GM12878 (cell line): ENCODE measurements at regions of chr21 and their contacts with region 1.

Region 1: GRCh38 chr21:15483138-15483780 is 246.5 kb upstream of the USP25 start:
- DNase-seq: peak; percentile 45
- ATAC-seq: peak; percentile 100
- H3K4me3 ChIP-seq: no peak overlapping the region
- H3K27ac ChIP-seq: no peak overlapping the region
- H3K4me1 ChIP-seq: no peaks in the 10 kb centered on the region
- H3K27me3 ChIP-seq: no peaks in the 10 kb centered on the region
- CTCF ChIP-seq: peak; percentile 88 to 95 (median 89)
- EP300 ChIP-seq: no peak
- POLR2A ChIP-seq: no peak
- RAD21 ChIP-seq: peak; percentile 96

Region 2: GRCh38 chr21:14259747-14260146 is 1223.5 kb before region 1 on chr21:
- CTCF ChIA-PET with region 1: interaction called, 5 read pairs
- POLR2A ChIA-PET with region 1: no interaction called
- RAD21 ChIA-PET with region 1: interaction called, 3 read pairs
- SMC1A ChIA-PET with region 1: no interaction called
- in situ Hi-C with region 1: no loop called
- intact Hi-C with region 1: loop called (anchors 10 kb)
- DNase-seq: no peak
- ATAC-seq: peak; percentile 76
- H3K4me3 ChIP-seq: no peak overlapping the region
- H3K27ac ChIP-seq: no peak overlapping the region
- H3K4me1 ChIP-seq: no peaks in the 10 kb centered on the region
- H3K27me3 ChIP-seq: no peaks in the 10 kb centered on the region; a peak in 1 of 4 replicates
- CTCF ChIP-seq: peak; percentile 35 to 56 (median 50); a peak in 4 of 6 replicates
- EP300 ChIP-seq: no peak
- POLR2A ChIP-seq: no peak
- RAD21 ChIP-seq: peak; percentile 69

Region 3: DNA sequence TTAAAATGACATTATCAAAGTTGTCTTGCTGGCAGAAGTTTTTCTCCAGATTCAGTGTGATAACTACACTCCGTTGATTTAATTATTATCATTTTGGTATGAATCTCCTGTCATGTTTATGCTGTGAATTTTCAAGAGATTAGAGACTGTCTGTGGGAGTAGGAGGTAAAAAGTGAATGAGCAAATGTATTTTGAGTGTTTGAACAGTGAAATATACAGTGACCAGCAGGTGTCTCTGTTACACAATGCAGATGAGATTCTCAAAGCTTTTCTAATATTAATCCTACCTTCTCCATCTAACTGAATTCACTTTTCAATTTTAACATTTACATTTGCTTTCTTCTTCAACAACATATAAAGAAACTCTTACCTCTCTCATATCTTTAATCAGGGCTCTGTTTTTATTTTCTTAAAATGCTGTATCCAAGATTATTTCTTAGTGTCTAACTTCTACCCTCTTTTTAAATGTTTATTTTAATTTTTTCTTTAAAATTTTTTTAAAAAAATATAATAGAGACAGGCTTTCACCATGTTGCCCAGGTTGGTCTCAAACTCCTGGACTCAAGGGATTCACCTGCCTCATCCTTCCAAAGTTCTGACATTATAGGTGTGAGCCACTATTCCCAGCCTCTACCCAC is 1079.5 kb before region 1 on chr21:
- CTCF ChIA-PET with region 1: no interaction called
- POLR2A ChIA-PET with region 1: no interaction called
- RAD21 ChIA-PET with region 1: interaction called, 3 read pairs
- SMC1A ChIA-PET with region 1: interaction called, 3 read pairs
- in situ Hi-C with region 1: no loop called
- intact Hi-C with region 1: loop called (anchors 2 kb)
- DNase-seq: peak; percentile 9
- ATAC-seq: peak; percentile 78
- H3K4me3 ChIP-seq: no peak overlapping the region
- H3K27ac ChIP-seq: no peak overlapping the region
- H3K4me1 ChIP-seq: no peaks in the 10 kb centered on the region
- H3K27me3 ChIP-seq: no peaks in the 10 kb centered on the region
- CTCF ChIP-seq: peak; percentile 42 to 72 (median 60); a peak in 5 of 6 replicates
- EP300 ChIP-seq: no peak
- POLR2A ChIP-seq: no peak
- RAD21 ChIP-seq: peak; percentile 83

Region 4: GRCh38 chr21:15058854-15059263 is 424.4 kb before region 1 on chr21:
- CTCF ChIA-PET with region 1: interaction called, 5 read pairs
- POLR2A ChIA-PET with region 1: no interaction called
- RAD21 ChIA-PET with region 1: interaction called, 4 read pairs
- SMC1A ChIA-PET with region 1: interaction called, 12 read pairs
- in situ Hi-C with region 1: loop called (anchors 10 kb)
- intact Hi-C with region 1: loop called (anchors 1 kb)
- DNase-seq: no peak
- ATAC-seq: peak; percentile 51
- H3K4me3 ChIP-seq: peak overlapping the region; percentile 52
- H3K27ac ChIP-seq: peak overlapping the region; percentile 80
- H3K4me1 ChIP-seq: peaks cover 4% of the 10 kb centered on the region
- H3K27me3 ChIP-seq: no peaks in the 10 kb centered on the region
- CTCF ChIP-seq: no peak
- EP300 ChIP-seq: no peak
- POLR2A ChIP-seq: no peak
- RAD21 ChIP-seq: no peak

Region 5: GRCh38 chr21:15064576-15065391 is 418.5 kb before region 1 on chr21 and contains the start of gene NRIP1:
- CTCF ChIA-PET with region 1: interaction called, 5 read pairs
- POLR2A ChIA-PET with region 1: no interaction called
- RAD21 ChIA-PET with region 1: interaction called, 5 read pairs
- SMC1A ChIA-PET with region 1: interaction called, 12 read pairs
- in situ Hi-C with region 1: loop called (anchors 10 kb)
- intact Hi-C with region 1: loop called (anchors 1 kb)
- DNase-seq: no peak
- ATAC-seq: peak; percentile 84
- H3K4me3 ChIP-seq: peak within 1 kb of the TSS; percentile 91
- H3K27ac ChIP-seq: peak within 1 kb of the TSS; percentile 63
- H3K4me1 ChIP-seq: no peaks in the 10 kb centered on the region
- H3K27me3 ChIP-seq: peaks cover 0 to 5% of the 10 kb centered on the region in 2 experiments; a peak in 1 of 4 replicates
- CTCF ChIP-seq: no peak
- EP300 ChIP-seq: no peak
- POLR2A ChIP-seq: peak; percentile 80
- RAD21 ChIP-seq: no peak
- polyA plus RNA-seq, gene NRIP1: 2.9 to 4.0 TPM

Region 6: GRCh38 chr21:15826147-15826780 is 343.0 kb after region 1 on chr21:
- CTCF ChIA-PET with region 1: no interaction called
- POLR2A ChIA-PET with region 1: no interaction called
- RAD21 ChIA-PET with region 1: no interaction called
- SMC1A ChIA-PET with region 1: no interaction called
- in situ Hi-C with region 1: no loop called
- intact Hi-C with region 1: loop called (anchors 10 kb)
- DNase-seq: peak; percentile 11
- ATAC-seq: peak; percentile 84
- H3K4me3 ChIP-seq: no peak overlapping the region
- H3K27ac ChIP-seq: no peak overlapping the region
- H3K4me1 ChIP-seq: no peaks in the 10 kb centered on the region
- H3K27me3 ChIP-seq: no peaks in the 10 kb centered on the region
- CTCF ChIP-seq: peak; percentile 50 to 79 (median 60); a peak in 5 of 6 replicates
- EP300 ChIP-seq: no peak
- POLR2A ChIP-seq: no peak
- RAD21 ChIP-seq: peak; percentile 75